ENCODE measurements at regions of chr7 and their contacts with region 1.

Region 1: DNA sequence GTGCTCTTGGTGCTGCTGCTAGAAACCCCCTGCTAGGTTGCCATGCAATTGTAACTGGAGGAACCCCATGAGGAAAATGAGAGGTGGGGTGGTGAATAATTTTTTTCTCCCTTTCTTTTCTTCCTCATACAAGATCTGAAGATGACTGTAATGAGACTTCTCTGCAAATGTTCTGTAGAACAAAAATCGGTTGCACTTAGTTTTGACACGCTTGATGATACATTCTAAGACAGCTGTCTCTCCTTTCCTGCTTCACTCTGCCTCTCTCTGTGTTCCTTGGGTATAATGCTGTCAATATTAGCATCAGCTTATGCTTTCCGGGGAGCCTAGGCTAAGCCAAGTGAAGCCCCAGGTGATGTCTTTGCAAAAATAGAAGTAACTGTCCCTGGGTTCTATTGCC is 721.5 kb downstream of the POM121L12 start:
- DNase-seq: no peak
- H3K4me3 ChIP-seq: no peak overlapping the region
- H3K27ac ChIP-seq: no peak overlapping the region
- H3K4me1 ChIP-seq: no peaks in the 10 kb centered on the region
- H3K27me3 ChIP-seq: no peaks in the 10 kb centered on the region
- CTCF ChIP-seq: no peak

Region 2: GRCh38 chr7:53690411-53690810 is 66.5 kb before region 1 on chr7:
- intact Hi-C with region 1: no loop called
- DNase-seq: no peak
- H3K4me3 ChIP-seq: no peak overlapping the region
- H3K27ac ChIP-seq: no peak overlapping the region
- H3K4me1 ChIP-seq: no peaks in the 10 kb centered on the region
- H3K27me3 ChIP-seq: no peaks in the 10 kb centered on the region
- CTCF ChIP-seq: no peak

Region 3: DNA sequence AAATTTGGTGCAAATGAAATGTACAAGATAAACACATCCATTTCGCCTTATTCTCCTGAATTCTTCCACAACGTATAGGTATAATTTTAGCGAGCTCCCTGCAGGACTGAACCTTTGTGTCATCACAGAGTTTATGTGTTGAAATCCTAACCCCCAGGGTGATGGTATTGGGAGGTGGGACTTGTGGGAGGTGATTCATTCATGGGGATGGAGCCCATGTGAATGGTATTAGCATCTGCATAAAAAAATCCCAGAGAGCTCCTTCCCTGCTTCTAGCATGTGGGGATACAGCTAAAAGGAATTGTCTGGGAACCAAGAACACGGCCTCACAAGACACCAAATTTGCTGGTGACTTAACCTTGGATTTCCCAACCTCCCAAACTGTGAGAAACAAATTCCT is 43.8 kb after region 1 on chr7:
- intact Hi-C with region 1: loop called (anchors 2 kb)
- DNase-seq: no peak
- H3K4me3 ChIP-seq: no peak overlapping the region
- H3K27ac ChIP-seq: no peak overlapping the region
- H3K4me1 ChIP-seq: no peaks in the 10 kb centered on the region
- H3K27me3 ChIP-seq: no peaks in the 10 kb centered on the region
- CTCF ChIP-seq: no peak

Measured in ascending aorta (tissue), 2 donors.